ENCODE measurements at regions of chr12 and their contacts with region 1.

Region 1: GRCh38 chr12:50066433-50066832 is 9.0 kb downstream of the ASIC1 start:
- DNase-seq: no peak

Region 2: DNA sequence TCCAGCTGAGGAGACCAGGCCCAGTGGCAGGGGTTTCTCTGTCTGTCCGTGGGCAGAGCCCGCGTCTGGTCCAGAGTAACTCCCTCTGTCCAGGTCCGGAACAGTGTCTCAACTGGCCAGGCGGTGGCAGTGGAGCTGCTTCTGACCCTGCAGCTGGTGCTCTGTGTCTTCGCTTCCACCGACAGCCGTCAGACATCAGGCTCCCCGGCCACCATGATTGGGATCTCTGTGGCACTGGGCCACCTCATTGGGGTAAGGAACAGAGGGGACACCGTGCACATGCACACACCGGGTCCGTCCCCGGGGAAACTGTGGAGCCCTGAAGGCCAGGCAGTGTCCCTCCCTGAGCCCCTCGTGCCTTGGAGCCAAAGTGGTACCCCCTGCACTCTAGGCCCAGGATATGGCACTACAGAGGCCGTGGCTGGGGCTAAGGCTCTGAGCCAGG is 92.2 kb before region 1 on chr12:
- in situ Hi-C with region 1: loop called (anchors 10 kb)
- DNase-seq: no peak

Region 3: DNA sequence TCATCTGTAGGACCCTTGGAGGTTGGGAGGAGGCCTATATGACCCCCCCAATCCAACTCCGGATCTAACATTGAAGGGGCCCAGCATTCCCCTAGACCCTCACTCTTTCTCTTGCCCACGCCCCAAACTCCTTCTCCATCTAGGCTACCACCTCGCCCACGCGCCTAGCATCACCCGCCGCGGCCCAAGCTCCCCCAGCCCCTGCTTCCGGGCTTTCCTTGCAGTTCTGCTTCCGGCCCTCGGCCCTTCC is 100.3 kb after region 1 on chr12:
- in situ Hi-C with region 1: no loop called
- DNase-seq: no peak